ENCODE measurements at regions of chr19 and their contacts with region 1.

Region 1: DNA sequence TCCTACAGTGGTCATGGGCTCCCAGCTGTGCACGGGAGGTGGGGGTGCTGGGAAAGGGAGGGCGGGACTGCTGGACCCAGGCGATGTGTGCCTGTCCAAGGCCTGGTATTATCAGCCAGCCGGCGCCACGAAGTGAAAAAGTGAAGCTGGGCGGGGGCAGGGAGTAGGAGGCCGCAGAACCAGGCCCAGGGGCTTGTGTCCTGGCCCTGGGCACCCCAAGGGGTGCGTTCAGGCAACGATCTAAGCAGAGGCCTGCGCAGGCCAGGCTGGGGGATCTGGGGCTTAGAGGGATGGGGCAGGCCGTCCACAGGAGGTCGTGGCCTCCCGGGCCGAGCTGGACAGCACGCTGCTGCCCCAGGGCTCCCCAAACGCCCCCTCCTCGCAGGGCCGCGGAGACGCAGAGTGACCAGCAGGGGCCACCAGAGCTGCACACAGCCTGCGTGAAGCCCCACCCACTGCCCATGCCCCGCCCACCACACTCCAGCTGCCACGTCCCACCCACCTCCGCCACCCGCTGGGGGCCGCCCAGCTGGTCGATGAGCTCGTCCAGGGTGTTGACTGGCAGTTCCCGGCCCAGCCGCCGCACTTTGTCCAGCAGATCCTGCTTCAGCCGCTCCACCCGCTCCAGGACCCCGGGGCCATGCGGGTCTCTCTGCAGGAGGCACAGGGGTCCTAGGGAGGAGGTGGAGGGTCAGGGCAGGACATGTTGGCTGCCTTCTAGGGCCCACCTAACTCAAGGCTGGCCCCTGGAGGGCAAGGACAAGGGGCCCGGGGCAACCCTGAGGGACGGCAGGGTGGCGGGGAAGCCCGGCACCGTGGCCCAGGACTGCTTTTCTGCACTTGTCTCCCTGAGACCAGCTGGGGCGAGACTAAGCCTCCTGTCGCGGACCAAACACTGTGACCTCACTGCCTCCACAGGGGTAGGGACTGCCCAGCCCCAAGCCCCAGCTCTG is 9.5 kb downstream of the GPX4 start:
- DNase-seq: peak; percentile 98 to 99 (median 98)
- ATAC-seq: peak; percentile 92
- H3K4me3 ChIP-seq: no peak overlapping the region
- H3K4me1 ChIP-seq: peaks cover 12% of the 10 kb centered on the region
- CTCF ChIP-seq: peak; percentile 92

Region 2: DNA sequence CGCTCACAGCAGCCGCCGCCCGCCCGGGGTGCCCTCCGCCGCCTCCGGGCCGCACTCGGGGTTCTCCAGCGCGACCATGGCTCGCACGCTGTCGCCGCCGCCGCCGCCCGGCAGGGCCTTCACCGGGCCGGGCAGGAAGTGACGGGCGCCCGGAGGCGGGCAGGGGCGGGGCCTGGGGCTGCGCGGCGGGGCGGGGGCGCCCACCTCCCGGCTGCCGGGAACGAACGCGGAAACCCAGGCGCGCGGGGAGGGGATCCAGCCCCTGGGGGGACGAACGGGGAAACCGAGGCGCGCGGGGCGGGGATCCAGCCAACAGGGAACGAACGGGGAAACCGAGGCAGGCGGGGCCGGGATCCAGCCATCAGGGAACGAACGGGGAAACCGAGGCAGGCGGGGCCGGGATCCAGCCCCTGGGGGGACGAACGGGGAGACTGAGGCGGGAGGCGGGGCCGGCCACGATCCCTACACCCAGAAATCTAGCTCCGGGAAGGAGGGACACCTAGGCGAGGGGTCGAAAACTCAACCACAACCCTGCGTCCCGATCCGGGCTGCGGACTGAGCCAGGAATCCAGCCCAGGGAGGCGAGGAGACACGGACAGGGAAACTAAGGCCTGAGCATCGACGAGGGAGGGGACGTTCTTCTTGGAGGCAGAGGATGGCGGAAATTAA is 200.1 kb before region 1 on chr19 and contains the start of gene R3HDM4:
- intact Hi-C with region 1: no loop called
- DNase-seq: peak; percentile 87 to 92 (median 89)
- ATAC-seq: peak; percentile 72
- H3K4me3 ChIP-seq: peak within 1 kb of the TSS; percentile 63
- H3K4me1 ChIP-seq: peaks cover 48% of the 10 kb centered on the region
- CTCF ChIP-seq: no peak
- total RNA-seq, gene R3HDM4: 52.6 to 62.6 (median 54.8) TPM

Region 3: DNA sequence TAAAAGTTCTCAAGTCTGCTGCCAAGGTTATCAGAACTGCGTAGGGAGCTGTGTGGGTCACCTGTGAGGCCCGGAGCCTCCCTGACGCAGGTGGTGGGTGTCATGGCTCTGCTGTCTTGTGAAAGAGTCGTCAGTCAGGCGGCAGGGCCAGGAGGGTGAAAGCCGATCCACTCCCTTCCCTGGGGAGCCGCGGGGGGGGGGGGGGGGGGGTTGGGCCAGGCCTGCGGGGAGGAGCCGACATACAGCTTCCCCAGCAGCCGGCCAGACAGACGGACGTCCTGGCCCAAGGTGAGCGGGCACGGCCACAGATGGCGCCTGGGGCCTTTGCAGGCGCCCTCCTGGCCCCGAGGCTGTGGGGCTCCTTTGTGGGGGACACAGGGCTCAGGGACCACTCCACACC is 48.4 kb after region 1 on chr19:
- intact Hi-C with region 1: no loop called
- DNase-seq: peak in 1 of 3 donors; percentile 65
- ATAC-seq: peak; percentile 20
- H3K4me3 ChIP-seq: no peak overlapping the region
- H3K4me1 ChIP-seq: no peaks in the 10 kb centered on the region
- CTCF ChIP-seq: no peak

Region 4: DNA sequence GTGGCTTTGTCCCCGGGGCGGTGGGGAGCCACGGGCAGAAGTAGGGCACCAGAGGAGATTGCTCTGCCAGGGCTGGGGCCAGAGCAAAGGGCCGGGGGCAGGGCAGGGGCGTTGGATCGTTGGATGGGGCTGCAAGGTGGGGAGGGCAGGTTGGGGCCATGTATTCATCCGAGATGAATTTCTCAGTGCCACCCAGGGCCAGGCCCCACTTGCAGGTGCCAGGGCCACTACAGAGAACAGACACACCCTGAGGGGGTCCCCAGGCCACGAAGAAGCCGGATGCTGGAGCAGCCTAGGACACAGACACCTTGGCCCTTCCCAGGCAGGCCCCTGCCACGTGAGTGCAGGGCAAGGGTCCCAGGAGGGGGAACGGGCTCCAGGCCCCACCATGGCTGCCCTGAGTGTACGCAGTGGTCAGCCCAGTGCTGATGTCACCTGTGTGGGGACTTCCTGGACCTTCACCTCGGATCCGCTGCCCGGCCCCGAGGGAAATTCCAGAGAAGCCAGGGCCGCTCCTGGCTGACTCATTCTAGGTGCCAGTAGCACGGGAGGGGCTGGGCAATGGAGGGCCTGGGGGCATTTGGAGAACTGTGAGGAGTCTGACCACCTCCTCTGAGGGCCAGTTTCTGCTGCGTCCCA is 70.3 kb after region 1 on chr19:
- intact Hi-C with region 1: loop called in 1 of 2 experiments (anchors 10 kb)
- DNase-seq: peak in 2 of 3 donors; percentile 68 to 82
- ATAC-seq: peak; percentile 80
- H3K4me3 ChIP-seq: no peak overlapping the region
- H3K4me1 ChIP-seq: peaks cover 14% of the 10 kb centered on the region
- CTCF ChIP-seq: no peak

Region 5: GRCh38 chr19:1189419-1189818 is 76.1 kb after region 1 on chr19:
- intact Hi-C with region 1: loop called (anchors 10 kb)
- DNase-seq: no peak
- ATAC-seq: peak; percentile 39
- H3K4me3 ChIP-seq: no peak overlapping the region
- H3K4me1 ChIP-seq: no peaks in the 10 kb centered on the region
- CTCF ChIP-seq: no peak

Region 6: DNA sequence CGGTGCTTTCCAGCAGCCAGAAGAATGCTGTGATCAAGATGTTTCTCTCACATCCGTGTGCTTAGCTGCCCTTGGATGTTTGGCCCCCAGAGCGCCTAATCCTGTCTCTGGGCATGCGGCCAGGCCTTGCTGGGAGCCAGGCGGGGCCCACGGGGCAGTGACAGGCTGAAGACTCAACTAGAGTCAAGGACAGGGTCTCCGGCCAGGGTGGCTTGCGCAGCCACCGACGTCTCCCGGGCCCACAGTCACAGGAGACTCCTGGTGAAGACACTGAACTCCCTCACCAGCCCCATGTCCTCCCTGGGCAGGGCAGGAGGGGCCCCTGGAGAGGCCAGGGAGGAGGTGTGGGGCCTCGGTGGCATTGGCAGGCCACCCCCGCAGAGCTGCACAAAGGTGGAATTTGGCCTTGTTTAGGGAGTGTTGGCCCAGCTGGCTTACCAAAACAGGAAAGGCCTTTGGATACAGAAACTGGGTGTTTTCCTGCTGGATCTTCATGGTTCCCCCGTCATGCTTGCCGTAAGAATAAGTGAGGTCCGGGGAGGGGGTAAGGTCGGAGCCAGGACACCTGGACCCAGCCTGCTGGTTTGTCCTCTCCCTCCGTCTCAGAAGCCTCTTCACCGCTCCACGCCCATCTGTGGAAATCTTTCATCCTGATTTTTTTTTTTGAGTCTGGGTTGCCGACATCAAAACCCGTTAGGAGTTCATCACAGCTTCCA is 260.4 kb after region 1 on chr19:
- intact Hi-C with region 1: no loop called
- DNase-seq: no peak
- ATAC-seq: peak; percentile 14
- H3K4me3 ChIP-seq: no peak overlapping the region
- H3K4me1 ChIP-seq: no peaks in the 10 kb centered on the region
- CTCF ChIP-seq: no peak